ENCODE measurements at regions of chr5 and their contacts with region 1.

Region 1: DNA sequence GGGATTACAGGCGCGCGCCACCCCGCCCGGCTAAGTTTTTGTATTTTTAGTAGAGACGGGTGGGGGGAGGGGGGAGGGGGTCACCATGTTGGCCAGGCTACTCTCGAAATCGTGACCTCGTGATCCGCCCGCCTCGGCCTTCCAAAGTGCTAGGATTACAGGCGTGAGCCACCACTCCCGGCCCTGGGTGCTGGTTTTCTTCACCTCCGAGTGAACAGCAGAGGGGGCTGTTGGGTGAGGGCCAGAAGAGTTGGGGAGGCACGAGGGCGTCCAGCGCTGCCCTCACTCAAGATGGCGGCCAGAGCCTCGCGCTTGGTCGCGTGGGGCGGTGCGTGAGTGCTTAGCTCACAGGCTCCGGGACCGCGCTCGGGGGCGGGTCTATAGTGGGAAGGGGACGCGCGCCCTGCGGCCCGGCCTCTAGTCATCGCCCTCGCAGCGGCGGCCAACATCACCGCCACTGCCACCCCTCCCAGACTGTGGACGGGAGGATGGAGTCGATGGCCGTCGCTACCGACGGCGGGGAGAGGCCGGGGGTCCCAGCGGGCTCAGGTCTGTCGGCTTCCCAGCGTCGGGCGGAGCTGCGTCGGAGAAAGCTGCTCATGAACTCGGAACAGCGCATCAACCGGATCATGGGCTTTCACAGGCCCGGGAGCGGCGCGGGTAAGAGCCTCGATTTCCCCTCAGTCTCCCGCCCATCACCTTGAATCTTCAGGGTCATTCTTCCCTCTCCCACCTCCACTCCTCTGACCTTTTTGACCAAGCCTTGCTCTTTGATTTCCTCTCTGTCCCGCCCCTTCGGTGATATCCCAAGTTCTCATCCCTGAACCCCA is at the start of gene CAMLG:
- DNase-seq: peak; percentile 92
- ATAC-seq: peak; percentile 97
- H3K4me3 ChIP-seq: peak within 1 kb of the TSS; percentile 90
- H3K27ac ChIP-seq: peak within 1 kb of the TSS; percentile 71
- H3K4me1 ChIP-seq: no peaks in the 10 kb centered on the region
- H3K27me3 ChIP-seq: no peaks in the 10 kb centered on the region
- CTCF ChIP-seq: peak; percentile 67 to 84 (median 74)
- EP300 ChIP-seq: no peak
- POLR2A ChIP-seq: peak; percentile 97
- RAD21 ChIP-seq: peak; percentile 60
- polyA plus RNA-seq, gene CAMLG: 27.0 to 51.7 TPM

Region 2: DNA sequence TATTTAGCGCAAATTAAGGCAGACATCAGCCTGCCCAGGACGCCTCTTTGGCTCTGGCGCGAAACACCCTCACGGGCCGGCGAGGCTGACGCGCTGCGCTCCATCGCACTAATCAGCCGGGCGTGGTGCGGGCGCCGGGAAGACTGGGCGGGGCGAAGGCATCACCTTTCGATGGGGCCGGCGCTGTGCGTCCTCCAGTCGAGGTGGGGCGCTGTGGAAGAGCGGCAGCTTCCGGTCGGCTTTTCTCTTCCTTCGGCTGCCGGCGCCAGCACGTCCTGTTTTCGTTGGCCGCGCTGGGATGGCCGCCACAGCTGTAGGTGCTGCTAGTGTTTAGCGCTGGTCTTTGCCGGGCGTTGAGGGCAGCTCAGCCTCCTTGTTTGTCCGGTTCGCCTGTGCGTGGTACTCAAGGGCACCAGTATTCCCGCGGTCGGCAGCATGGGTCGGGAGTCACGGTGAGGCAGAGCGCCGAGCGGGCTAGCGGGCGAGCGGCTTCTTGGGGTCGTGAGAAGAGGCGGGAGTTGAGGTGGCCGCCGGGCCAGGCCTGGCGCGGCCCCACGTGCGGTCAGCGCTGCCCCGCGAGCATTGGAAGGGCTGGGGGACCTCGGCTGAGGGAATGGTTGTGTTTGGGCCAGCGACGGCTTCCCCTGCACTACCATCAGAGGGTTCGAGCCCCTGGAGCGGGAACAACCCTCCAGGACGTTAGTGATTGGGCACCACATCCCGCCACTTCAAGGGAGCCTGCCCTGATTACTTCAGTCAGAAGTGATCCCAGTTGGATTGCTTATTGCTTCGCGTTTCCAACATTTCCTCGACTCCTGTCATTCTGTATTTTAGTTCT is 20.4 kb after region 1 on chr5 and contains the start of gene DDX46:
- CTCF ChIA-PET with region 1: interaction called, 71 read pairs
- POLR2A ChIA-PET with region 1: interaction called, 23 read pairs
- RAD21 ChIA-PET with region 1: interaction called, 24 read pairs
- SMC1A ChIA-PET with region 1: interaction called, 28 read pairs
- in situ Hi-C with region 1: no loop called
- intact Hi-C with region 1: loop called (anchors 1 kb)
- DNase-seq: peak; percentile 64
- ATAC-seq: peak; percentile 98
- H3K4me3 ChIP-seq: peak within 1 kb of the TSS; percentile 82
- H3K27ac ChIP-seq: peak within 1 kb of the TSS; percentile 68
- H3K4me1 ChIP-seq: no peaks in the 10 kb centered on the region; the same call in 1 of the 2 replicates
- H3K27me3 ChIP-seq: no peaks in the 10 kb centered on the region
- CTCF ChIP-seq: peak; percentile 88 to 96 (median 90)
- EP300 ChIP-seq: no peak
- POLR2A ChIP-seq: peak; percentile 95
- RAD21 ChIP-seq: no peak
- polyA plus RNA-seq, gene DDX46: 23.0 to 31.3 TPM

Region 3: DNA sequence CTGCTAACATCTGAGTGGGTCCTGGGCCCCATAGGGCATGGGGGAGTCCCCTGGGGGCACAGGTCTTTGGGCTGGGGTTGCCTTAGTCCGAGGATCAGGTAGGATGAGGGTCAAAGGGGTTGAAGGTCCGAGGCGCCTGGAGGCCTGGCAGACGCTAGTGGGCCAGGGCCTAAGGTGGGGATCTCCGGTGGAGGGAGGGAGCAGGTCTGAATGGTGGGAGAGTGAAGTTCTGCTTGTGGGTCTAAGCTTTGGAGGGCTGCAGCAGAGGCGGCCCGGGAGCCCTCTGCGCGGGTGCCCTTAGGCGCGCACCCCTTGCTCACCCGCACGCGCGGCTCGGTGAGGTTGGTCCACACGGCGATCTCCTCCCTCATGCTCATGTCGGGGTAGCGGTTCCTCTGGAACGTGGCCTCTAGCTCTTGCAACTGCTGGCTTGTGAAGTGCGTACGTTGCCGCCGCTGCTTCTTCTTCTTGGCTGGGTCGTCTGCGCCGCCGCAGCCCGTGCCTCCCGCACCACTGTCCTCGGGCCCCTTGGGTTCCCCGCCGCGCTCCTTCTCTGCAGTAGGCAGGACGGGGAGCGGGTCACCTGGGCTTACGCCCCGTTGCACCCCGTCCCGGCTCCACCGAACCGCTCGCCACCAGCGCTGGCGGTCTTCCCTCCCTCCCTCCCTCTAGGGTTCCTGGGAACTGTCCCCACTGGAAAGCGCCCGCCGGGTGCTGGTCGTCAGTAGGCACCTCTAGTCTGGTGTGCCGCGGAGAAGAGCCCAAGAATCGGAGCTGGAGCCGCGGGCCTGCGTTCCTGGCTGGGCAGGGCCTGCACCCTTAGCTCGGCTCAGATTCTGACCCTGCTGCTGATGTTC is 292.8 kb after region 1 on chr5:
- CTCF ChIA-PET with region 1: no interaction called
- POLR2A ChIA-PET with region 1: no interaction called
- RAD21 ChIA-PET with region 1: no interaction called
- SMC1A ChIA-PET with region 1: no interaction called
- in situ Hi-C with region 1: no loop called
- intact Hi-C with region 1: no loop called
- DNase-seq: no peak
- ATAC-seq: peak; percentile 18; the same call in 1 of the 3 replicates
- H3K4me3 ChIP-seq: 0 out of 2 replicates have a peak overlapping the region, but pooled peaks have one; percentile 36
- H3K27ac ChIP-seq: no peak overlapping the region
- H3K4me1 ChIP-seq: no peaks in the 10 kb centered on the region
- H3K27me3 ChIP-seq: peaks cover 31 to 34% of the 10 kb centered on the region in 2 experiments
- CTCF ChIP-seq: no peak
- EP300 ChIP-seq: no peak
- POLR2A ChIP-seq: no peak
- RAD21 ChIP-seq: no peak